Activated CD4-positive, alpha-beta memory T cell treated with anti-CD3 and anti-CD28 coated beads, Interleukin-2, amount 10 ng/mL, durations not matched to agents 7 days and 5 days (primary cell): ENCODE measurements at regions of chr1 and their contacts with region 1.

Region 1: GRCh38 chr1:33127001-33127791 is 46.2 kb downstream of the AZIN2 start:
- DNase-seq: peak; percentile 99
- H3K4me3 Mint-ChIP-seq: peak overlapping the region; percentile 93
- H3K27ac Mint-ChIP-seq: peak overlapping the region; percentile 95
- H3K4me1 Mint-ChIP-seq: peaks cover 51% of the 10 kb centered on the region
- H3K27me3 Mint-ChIP-seq: no peaks in the 10 kb centered on the region

Region 2: GRCh38 chr1:32964461-32965250 is 162.5 kb before region 1 on chr1 and contains the start of gene RNF19B:
- CTCF ChIA-PET with region 1: interaction called, 8 read pairs
- POLR2A ChIA-PET with region 1: interaction called, 12 read pairs
- DNase-seq: peak; percentile 96
- H3K4me3 Mint-ChIP-seq: peak within 1 kb of the TSS; percentile 79
- H3K27ac Mint-ChIP-seq: peak within 1 kb of the TSS; percentile 85
- H3K4me1 Mint-ChIP-seq: peaks cover 60% of the 10 kb centered on the region
- H3K27me3 Mint-ChIP-seq: peaks cover 3% of the 10 kb centered on the region
- total RNA-seq, gene RNF19B: 42.9 to 46.9 TPM

Region 3: DNA sequence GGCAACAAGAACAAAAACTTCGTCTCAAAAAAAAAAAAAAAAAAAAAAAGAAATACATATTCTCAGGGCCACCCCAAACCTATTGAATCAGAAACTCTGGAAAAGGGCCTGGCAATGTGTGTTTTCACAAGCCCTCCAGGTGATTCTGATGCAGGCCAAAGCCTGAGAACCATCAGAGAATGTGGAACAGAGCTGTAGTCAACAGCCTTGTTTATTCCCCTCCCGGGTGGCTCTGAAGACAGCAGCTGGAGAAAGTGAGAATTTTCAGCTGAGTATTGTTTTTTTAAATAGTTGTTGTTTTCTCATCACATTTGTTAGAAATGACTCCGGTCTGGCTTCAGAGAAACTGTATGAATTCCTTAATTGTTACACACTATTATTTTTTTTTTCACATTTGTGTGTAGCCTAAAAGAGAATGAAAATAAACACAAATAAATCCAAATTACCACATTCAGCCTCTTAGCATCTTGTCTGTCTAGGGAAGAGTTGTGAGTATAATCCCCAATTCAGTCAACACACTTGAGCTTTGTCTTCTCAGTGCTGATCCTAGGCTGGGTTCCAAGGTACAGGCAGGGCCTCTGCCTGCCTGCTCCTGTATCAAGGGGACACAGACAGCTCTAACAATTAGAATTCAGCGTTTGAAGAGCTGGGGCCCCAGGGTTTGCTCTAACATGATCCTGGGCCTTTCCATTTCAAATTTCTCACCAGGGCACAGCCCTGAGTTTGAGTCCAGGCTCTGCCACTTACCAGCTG is 52.8 kb before region 1 on chr1:
- CTCF ChIA-PET with region 1: no interaction called
- POLR2A ChIA-PET with region 1: no interaction called
- DNase-seq: no peak
- H3K4me3 Mint-ChIP-seq: no peak overlapping the region
- H3K27ac Mint-ChIP-seq: no peak overlapping the region
- H3K4me1 Mint-ChIP-seq: peaks cover 8% of the 10 kb centered on the region
- H3K27me3 Mint-ChIP-seq: peaks cover 15% of the 10 kb centered on the region

Region 4: DNA sequence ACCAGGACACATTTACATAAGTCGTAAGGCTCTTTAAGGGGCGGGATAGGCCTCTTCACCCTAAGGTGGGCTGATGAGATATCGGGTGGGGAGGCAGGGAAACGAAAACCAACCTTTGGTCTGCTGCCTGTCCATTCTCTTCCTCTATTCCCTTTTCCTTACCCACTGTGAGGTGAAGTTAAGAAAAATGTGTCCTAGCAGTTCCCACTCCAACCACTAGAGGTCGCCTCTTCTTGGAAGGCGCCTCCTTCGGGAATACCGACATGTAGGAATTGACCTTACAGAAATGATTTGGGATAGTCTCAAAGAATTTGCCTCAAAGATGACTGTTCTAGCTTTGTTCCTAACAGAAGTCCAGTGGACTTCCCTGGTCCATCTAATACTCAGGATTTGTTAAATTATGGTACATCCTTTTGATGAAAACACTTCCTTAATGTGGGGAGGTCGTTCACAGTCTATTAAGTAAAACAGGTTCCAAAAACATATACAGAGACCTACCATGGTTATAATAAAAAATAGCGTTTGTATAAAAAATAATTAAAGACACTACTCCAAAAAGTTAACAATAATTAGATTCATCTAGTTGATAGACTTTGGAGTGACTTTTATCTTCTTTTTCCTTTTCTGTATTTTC is 32.1 kb before region 1 on chr1:
- CTCF ChIA-PET with region 1: interaction called, 94 read pairs
- POLR2A ChIA-PET with region 1: interaction called, 58 read pairs
- DNase-seq: no peak
- H3K4me3 Mint-ChIP-seq: no peak overlapping the region
- H3K27ac Mint-ChIP-seq: no peak overlapping the region
- H3K4me1 Mint-ChIP-seq: peaks cover 55% of the 10 kb centered on the region
- H3K27me3 Mint-ChIP-seq: no peaks in the 10 kb centered on the region

Region 5: GRCh38 chr1:33137800-33138199 is 10.6 kb after region 1 on chr1:
- CTCF ChIA-PET with region 1: interaction called, 15 read pairs
- POLR2A ChIA-PET with region 1: interaction called, 18 read pairs
- DNase-seq: peak; percentile 32
- H3K4me3 Mint-ChIP-seq: no peak overlapping the region
- H3K27ac Mint-ChIP-seq: no peak overlapping the region
- H3K4me1 Mint-ChIP-seq: peaks cover 13% of the 10 kb centered on the region
- H3K27me3 Mint-ChIP-seq: no peaks in the 10 kb centered on the region

Region 6: GRCh38 chr1:33181921-33182341 is 54.7 kb after region 1 on chr1 and contains the start of gene TRIM62:
- CTCF ChIA-PET with region 1: interaction called, 26 read pairs
- POLR2A ChIA-PET with region 1: interaction called, 48 read pairs
- DNase-seq: peak; percentile 79
- H3K4me3 Mint-ChIP-seq: peak within 1 kb of the TSS; percentile 90
- H3K27ac Mint-ChIP-seq: peak within 1 kb of the TSS; percentile 80
- H3K4me1 Mint-ChIP-seq: peaks cover 26% of the 10 kb centered on the region
- H3K27me3 Mint-ChIP-seq: peaks cover 29% of the 10 kb centered on the region
- total RNA-seq, gene TRIM62: 10.3 to 11.5 TPM

Region 7: DNA sequence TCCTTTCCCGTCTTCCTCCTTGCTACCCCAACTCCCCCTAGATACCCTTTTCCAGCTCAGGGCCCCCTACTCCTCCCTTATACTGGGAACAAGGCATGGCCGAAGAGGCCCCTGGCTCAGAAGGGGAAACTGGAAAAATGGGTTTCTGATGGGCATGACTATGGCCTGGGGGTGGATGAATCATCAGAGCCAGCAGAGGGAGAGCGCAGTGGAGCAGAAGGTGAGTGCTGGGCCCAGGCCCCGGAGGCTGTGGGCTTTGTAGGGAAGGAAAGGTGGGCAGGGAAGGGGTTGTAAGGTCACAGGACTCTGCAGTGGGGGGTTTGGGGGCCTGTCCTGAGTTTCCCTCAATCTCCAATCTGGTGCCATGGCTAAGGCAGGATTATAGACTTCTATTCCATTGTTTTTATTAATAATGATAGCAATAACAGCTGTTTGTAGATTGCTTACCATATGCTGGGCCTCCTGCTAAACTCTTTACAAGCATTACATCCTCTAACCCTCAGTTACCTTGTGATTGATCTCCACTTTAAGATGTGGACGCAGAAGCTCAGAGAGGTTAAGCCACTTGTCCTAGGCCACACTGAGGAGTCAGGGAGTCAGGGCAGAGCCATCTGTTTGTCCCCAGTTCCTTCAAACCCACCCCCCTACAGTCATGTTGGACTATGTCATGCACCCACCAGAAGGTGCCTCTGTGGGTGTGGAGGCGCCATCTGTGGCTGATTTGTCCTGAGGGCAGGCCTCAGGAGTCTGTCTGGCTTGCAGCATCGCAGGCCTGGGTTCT is 92.9 kb after region 1 on chr1:
- CTCF ChIA-PET with region 1: no interaction called
- POLR2A ChIA-PET with region 1: no interaction called
- DNase-seq: no peak
- H3K4me3 Mint-ChIP-seq: no peak overlapping the region
- H3K27ac Mint-ChIP-seq: no peak overlapping the region
- H3K4me1 Mint-ChIP-seq: no peaks in the 10 kb centered on the region
- H3K27me3 Mint-ChIP-seq: peaks cover 17% of the 10 kb centered on the region